Naive thymus-derived CD4-positive, alpha-beta T cell (primary cell): ENCODE measurements at regions of chrX and their contacts with region 1.

Region 1: GRCh38 chrX:119468930-119469635 is 839 bp downstream of the SLC25A5 start:
- DNase-seq: peak; percentile 81 to 90 (median 87)
- ATAC-seq: peak; percentile 87
- H3K4me3 ChIP-seq: peak overlapping the region; percentile 87
- H3K4me3 Mint-ChIP-seq: peak overlapping the region; percentile 78 to 97 (median 89)
- H3K27ac ChIP-seq: peak overlapping the region; percentile 99
- H3K27ac Mint-ChIP-seq: peak overlapping the region; percentile 82 to 95 (median 89)
- H3K4me1 ChIP-seq: peaks cover 5 to 6% of the 10 kb centered on the region in 2 donors
- H3K4me1 Mint-ChIP-seq: peaks cover 0 to 17% (median 10%) of the 10 kb centered on the region in 7 donors
- H3K27me3 ChIP-seq: no peaks in the 10 kb centered on the region
- H3K27me3 Mint-ChIP-seq: no peaks in the 10 kb centered on the region

Region 2: GRCh38 chrX:119235872-119236622 is 233.0 kb before region 1 on chrX and contains the start of gene PGRMC1:
- CTCF ChIA-PET with region 1: no interaction called
- POLR2A ChIA-PET with region 1: no interaction called
- intact Hi-C with region 1: loop called (anchors 1 to 5 kb)
- DNase-seq: peak; percentile 60 to 84 (median 79)
- ATAC-seq: peak; percentile 98
- H3K4me3 ChIP-seq: peak within 1 kb of the TSS; percentile 68
- H3K4me3 Mint-ChIP-seq: peak within 1 kb of the TSS; percentile 83 to 93 (median 90)
- H3K27ac ChIP-seq: peak within 1 kb of the TSS; percentile 74
- H3K27ac Mint-ChIP-seq: peak within 1 kb of the TSS; percentile 49 to 88 (median 79)
- H3K4me1 ChIP-seq: peaks cover 8 to 11% of the 10 kb centered on the region in 2 donors
- H3K4me1 Mint-ChIP-seq: peaks cover 13 to 36% (median 31%) of the 10 kb centered on the region in 7 donors
- H3K27me3 ChIP-seq: no peaks in the 10 kb centered on the region
- H3K27me3 Mint-ChIP-seq: peaks cover 0 to 29% (median 0%) of the 10 kb centered on the region in 5 donors
- total RNA-seq, gene PGRMC1: 9.5 to 28.4 (median 11.9) TPM

Region 3: GRCh38 chrX:119502727-119503483 is 33.8 kb after region 1 on chrX:
- CTCF ChIA-PET with region 1: no interaction called
- POLR2A ChIA-PET with region 1: no interaction called
- intact Hi-C with region 1: loop called in 1 of 2 experiments (anchors 5 kb)
- DNase-seq: peak in 7 of 9 donors; percentile 17 to 70 (median 58)
- ATAC-seq: peak; percentile 85
- H3K4me3 ChIP-seq: no peak overlapping the region
- H3K4me3 Mint-ChIP-seq: peak overlapping the region in 8 of 10 donors; percentile 51 to 77 (median 71)
- H3K27ac ChIP-seq: peak overlapping the region; percentile 50
- H3K27ac Mint-ChIP-seq: peak overlapping the region; percentile 69 to 97 (median 87)
- H3K4me1 ChIP-seq: peaks cover 0 to 20% of the 10 kb centered on the region in 2 donors
- H3K4me1 Mint-ChIP-seq: peaks cover 6 to 24% (median 14%) of the 10 kb centered on the region in 7 donors
- H3K27me3 ChIP-seq: no peaks in the 10 kb centered on the region
- H3K27me3 Mint-ChIP-seq: no peaks in the 10 kb centered on the region

Region 4: GRCh38 chrX:119574394-119575266 is 105.5 kb after region 1 on chrX and contains the start of gene UBE2A:
- CTCF ChIA-PET with region 1: interaction called, 3 read pairs
- POLR2A ChIA-PET with region 1: no interaction called
- intact Hi-C with region 1: loop called (anchors 1 to 2 kb)
- DNase-seq: peak; percentile 72 to 89 (median 85)
- ATAC-seq: peak; percentile 99
- H3K4me3 ChIP-seq: peak within 1 kb of the TSS; percentile 72
- H3K4me3 Mint-ChIP-seq: peak within 1 kb of the TSS; percentile 85 to 96 (median 92)
- H3K27ac ChIP-seq: peak within 1 kb of the TSS; percentile 88
- H3K27ac Mint-ChIP-seq: peak within 1 kb of the TSS; percentile 85 to 97 (median 90)
- H3K4me1 ChIP-seq: peaks cover 0 to 11% of the 10 kb centered on the region in 2 donors
- H3K4me1 Mint-ChIP-seq: peaks cover 7 to 35% (median 18%) of the 10 kb centered on the region in 7 donors
- H3K27me3 ChIP-seq: no peaks in the 10 kb centered on the region
- H3K27me3 Mint-ChIP-seq: no peaks in the 10 kb centered on the region
- total RNA-seq, gene UBE2A: 34.0 to 74.7 (median 60.2) TPM

Region 5: DNA sequence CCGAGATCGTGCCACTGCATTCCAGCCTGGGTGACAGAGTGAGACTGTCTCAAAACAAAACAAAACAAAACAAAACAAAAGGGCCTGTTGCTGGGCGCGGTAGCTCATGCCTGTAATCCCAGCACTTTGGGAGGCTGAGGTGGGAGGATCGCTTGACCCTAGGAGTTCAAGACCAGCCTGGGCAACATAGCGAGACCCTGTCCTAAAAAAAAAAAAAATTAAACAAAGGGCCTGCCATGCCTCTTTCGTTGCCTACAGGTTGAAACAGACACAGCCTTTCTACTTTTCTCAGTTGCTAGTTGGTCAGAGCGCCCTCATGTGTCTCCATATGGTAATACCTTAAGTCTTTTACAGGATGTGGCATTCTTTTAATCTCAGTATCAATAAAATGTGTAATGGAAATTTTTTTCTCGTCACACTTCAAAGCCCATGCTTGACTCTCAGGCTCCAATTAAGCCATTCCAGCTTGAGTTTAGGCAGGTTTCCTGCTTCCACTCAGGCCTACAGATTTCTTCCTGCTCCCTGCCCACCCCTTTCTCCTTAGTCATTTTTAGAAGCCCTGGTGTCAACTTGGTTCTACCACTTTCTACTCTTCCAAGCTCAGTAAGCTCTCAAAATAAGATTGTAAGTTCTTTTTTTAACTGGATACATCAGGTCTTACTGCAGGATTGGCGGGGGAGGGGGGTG is 284.6 kb after region 1 on chrX:
- CTCF ChIA-PET with region 1: no interaction called
- POLR2A ChIA-PET with region 1: interaction called, 4 read pairs
- intact Hi-C with region 1: loop called (anchors 1 to 2 kb)
- DNase-seq: peak in 7 of 9 donors; percentile 77 to 89 (median 80)
- ATAC-seq: peak; percentile 83
- H3K4me3 ChIP-seq: no peak overlapping the region
- H3K4me3 Mint-ChIP-seq: peak overlapping the region; percentile 40 to 81 (median 70)
- H3K27ac ChIP-seq: peak overlapping the region; percentile 76
- H3K27ac Mint-ChIP-seq: peak overlapping the region; percentile 90 to 99 (median 96)
- H3K4me1 ChIP-seq: peaks cover 38 to 39% of the 10 kb centered on the region in 2 donors
- H3K4me1 Mint-ChIP-seq: peaks cover 21 to 50% (median 40%) of the 10 kb centered on the region in 7 donors
- H3K27me3 ChIP-seq: no peaks in the 10 kb centered on the region
- H3K27me3 Mint-ChIP-seq: no peaks in the 10 kb centered on the region

Region 6: DNA sequence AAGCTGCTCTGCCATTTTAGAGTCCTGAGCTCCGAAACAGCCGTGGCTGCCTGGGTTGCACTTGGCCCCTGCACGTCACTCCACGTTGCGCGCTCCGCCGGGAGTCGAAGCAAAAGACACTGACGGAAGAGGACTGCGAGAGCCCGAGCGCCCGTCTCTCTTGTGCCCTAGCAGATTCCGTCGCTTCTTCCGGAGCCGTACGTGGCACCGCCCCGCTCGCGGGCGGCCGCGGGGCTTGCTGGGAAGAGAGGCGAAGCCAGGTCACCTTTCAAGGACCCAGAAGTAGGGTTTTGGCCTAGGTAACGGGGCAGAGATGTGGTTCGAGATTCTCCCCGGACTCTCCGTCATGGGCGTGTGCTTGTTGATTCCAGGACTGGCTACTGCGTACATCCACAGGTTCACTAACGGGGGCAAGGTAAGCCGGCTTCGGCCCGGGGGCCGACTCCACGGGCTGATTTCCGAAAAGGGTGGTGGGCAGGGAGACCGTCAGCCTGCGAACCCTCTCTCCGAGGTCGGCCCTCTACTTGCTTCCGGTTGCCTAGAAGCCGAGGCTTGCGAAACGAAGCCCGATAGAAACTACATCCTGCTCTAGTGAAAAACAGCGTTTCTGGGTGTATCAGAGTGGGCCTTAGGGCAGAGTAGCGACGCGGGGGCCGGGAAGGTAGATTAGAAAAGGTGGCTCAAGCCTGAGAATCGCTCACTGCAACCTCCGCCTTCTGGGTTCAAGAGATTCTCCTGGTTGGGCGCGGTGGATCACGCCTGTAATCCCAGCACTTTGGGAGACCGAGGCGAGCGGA is 402.7 kb after region 1 on chrX and contains the starts of genes NDUFA1 and RNF113A:
- CTCF ChIA-PET with region 1: no interaction called
- POLR2A ChIA-PET with region 1: no interaction called
- intact Hi-C with region 1: loop called (anchors 1 to 2 kb)
- DNase-seq: peak; percentile 65 to 90 (median 88)
- ATAC-seq: peak; percentile 95
- H3K4me3 ChIP-seq: peak within 1 kb of the TSS; percentile 90
- H3K4me3 Mint-ChIP-seq: peak within 1 kb of the TSS; percentile 86 to 100 (median 97)
- H3K27ac ChIP-seq: peak within 1 kb of the TSS; percentile 88
- H3K27ac Mint-ChIP-seq: peak within 1 kb of the TSS; percentile 94 to 100 (median 99)
- H3K4me1 ChIP-seq: peaks cover 7 to 8% of the 10 kb centered on the region in 2 donors
- H3K4me1 Mint-ChIP-seq: peaks cover 6 to 35% (median 15%) of the 10 kb centered on the region in 7 donors
- H3K27me3 ChIP-seq: no peaks in the 10 kb centered on the region
- H3K27me3 Mint-ChIP-seq: no peaks in the 10 kb centered on the region
- total RNA-seq, gene NDUFA1: 41.6 to 94.7 (median 46.8) TPM
- total RNA-seq, gene RNF113A: 25.5 to 40.6 (median 34.7) TPM

Region 7: DNA sequence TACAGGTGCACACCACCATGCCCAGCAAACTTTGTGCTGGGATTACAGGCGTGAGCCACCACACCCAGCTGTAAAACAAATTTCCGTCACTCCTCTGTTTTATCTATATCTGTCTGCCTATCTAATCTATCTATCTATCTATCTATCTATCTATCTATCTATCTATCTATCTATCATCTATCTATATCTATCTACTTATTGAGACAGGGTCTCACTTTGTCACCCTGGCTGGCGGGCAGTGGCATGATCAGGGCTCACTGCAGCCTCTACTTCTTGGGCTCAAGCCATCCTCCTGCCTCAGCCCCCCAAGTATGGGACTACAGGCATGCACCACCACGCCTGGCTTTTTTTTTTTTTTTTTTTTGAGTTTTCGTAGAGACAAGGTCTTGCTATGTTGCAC is 447.2 kb after region 1 on chrX:
- CTCF ChIA-PET with region 1: no interaction called
- POLR2A ChIA-PET with region 1: no interaction called
- intact Hi-C with region 1: no loop called
- DNase-seq: no peak
- ATAC-seq: no peak
- H3K4me3 ChIP-seq: no peak overlapping the region
- H3K4me3 Mint-ChIP-seq: no peak overlapping the region
- H3K27ac ChIP-seq: no peak overlapping the region
- H3K27ac Mint-ChIP-seq: no peak overlapping the region
- H3K4me1 ChIP-seq: no peaks in the 10 kb centered on the region
- H3K4me1 Mint-ChIP-seq: no peaks in the 10 kb centered on the region
- H3K27me3 ChIP-seq: no peaks in the 10 kb centered on the region
- H3K27me3 Mint-ChIP-seq: no peaks in the 10 kb centered on the region